H1 (cell line): ENCODE measurements at regions of chr4 and their contacts with region 1.

Region 1: DNA sequence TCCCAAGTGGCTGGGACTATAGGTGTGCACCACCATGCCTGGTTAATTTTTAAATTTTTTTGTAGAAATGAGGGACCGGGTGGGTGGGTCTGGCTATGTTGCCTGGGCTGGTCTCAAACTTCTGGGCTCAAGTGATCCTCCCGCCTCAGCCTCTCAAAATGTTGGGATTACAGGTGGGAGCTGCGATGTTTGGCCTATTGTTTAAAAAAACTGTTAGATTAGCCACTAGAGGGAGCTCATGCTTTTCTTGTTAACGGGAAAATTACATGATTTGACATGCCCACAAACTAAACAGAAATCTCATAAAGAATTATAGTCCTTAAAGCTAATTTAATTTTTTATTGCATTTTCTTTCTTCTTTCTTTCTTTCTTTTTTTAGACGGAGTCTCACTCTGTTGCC is 5.0 kb upstream of the SDAD1 start:
- DNase-seq: no peak
- H3K4me3 ChIP-seq: no peak overlapping the region
- H3K27ac ChIP-seq: no peak overlapping the region
- H3K4me1 ChIP-seq: no peaks in the 10 kb centered on the region; a peak in 1 of 7 replicates
- H3K27me3 ChIP-seq: no peaks in the 10 kb centered on the region
- CTCF ChIP-seq: peak in 2 of 3 experiments; percentile 44 to 54; a peak in 3 of 4 replicates
- EP300 ChIP-seq: no peak
- POLR2A ChIP-seq: no peak
- RAD21 ChIP-seq: peak; percentile 69 to 77

Region 2: DNA sequence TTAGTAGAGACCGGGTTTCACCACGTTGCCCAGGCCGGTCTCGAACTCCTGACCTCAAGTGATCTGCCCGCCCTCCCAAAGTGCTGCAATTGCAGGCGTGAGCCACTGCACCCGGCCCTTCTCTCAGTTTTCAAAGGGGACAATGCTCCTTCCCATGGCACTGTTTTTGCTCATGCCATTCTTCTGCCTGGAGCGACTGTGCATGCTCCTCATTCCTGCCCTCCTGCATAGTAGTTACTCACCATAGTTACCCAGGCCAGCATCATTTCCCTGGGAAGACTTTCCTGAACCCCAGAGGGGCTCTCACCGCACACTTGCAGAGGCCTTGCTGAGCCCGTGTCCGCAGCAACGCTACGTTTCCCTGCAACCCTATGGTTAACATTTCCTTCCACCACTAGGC is 14.8 kb after region 1 on chr4:
- CTCF ChIA-PET with region 1: interaction called, 14 read pairs
- POLR2A ChIA-PET with region 1: no interaction called
- DNase-seq: no peak
- H3K4me3 ChIP-seq: no peak overlapping the region
- H3K27ac ChIP-seq: no peak overlapping the region
- H3K4me1 ChIP-seq: peaks cover 0 to 3% (median 1%) of the 10 kb centered on the region in 4 experiments; a peak in 4 of 7 replicates
- H3K27me3 ChIP-seq: no peaks in the 10 kb centered on the region; a peak in 1 of 7 replicates
- CTCF ChIP-seq: no peak
- EP300 ChIP-seq: no peak
- POLR2A ChIP-seq: no peak
- RAD21 ChIP-seq: no peak

Region 3: GRCh38 chr4:76055016-76055415 is 59.3 kb after region 1 on chr4:
- CTCF ChIA-PET with region 1: interaction called, 25 read pairs
- POLR2A ChIA-PET with region 1: no interaction called
- DNase-seq: no peak
- H3K4me3 ChIP-seq: no peak overlapping the region
- H3K27ac ChIP-seq: no peak overlapping the region
- H3K4me1 ChIP-seq: peaks cover 0 to 13% (median 10%) of the 10 kb centered on the region in 4 experiments; a peak in 4 of 7 replicates
- H3K27me3 ChIP-seq: no peaks in the 10 kb centered on the region
- CTCF ChIP-seq: no peak
- EP300 ChIP-seq: no peak
- POLR2A ChIP-seq: no peak
- RAD21 ChIP-seq: no peak

Region 4: GRCh38 chr4:76067652-76068286 is 72.0 kb after region 1 on chr4:
- CTCF ChIA-PET with region 1: interaction called, 88 read pairs
- POLR2A ChIA-PET with region 1: interaction called, 5 read pairs
- DNase-seq: peak in 1 of 2 experiments; percentile 71
- H3K4me3 ChIP-seq: no peak overlapping the region
- H3K27ac ChIP-seq: no peak overlapping the region
- H3K4me1 ChIP-seq: peaks cover 0 to 5% (median 4%) of the 10 kb centered on the region in 4 experiments; a peak in 4 of 7 replicates
- H3K27me3 ChIP-seq: no peaks in the 10 kb centered on the region
- CTCF ChIP-seq: peak; percentile 42 to 79 (median 78)
- EP300 ChIP-seq: no peak
- POLR2A ChIP-seq: no peak
- RAD21 ChIP-seq: peak; percentile 88 to 90

Region 5: DNA sequence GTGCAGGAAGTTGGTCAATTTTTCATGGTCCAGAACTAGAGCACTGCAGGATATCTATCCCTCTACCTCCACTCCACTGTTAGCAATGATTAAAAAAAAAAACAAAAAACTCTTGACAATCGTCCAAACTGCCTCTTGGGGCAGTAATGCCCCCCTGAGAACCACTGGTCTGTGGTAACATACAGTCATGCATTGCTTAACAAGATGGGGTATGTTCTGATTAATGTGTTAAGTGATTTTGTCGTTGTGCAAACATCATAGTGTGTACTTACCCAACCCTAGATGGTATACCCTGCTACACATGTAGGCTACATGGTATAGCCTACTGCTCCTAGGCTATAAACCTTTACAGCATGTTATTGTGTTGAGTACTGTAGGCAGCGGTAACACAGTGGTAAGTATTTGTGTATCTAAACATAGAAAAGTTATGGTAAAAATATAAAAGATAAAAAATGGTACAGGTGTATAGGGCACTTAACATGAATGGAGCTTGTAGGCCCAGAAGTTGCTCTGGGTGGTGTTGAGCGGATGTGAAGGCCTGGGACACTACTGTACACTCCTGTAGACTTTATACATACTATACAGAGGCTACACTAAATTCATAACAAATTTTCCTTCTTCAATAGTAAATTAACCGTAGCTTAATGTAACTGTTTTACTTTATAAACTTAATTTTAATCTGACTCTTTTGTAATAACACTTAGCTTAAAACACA is 112.9 kb after region 1 on chr4:
- CTCF ChIA-PET with region 1: interaction called, 16 read pairs
- POLR2A ChIA-PET with region 1: no interaction called
- DNase-seq: no peak
- H3K4me3 ChIP-seq: no peak overlapping the region
- H3K27ac ChIP-seq: no peak overlapping the region
- H3K4me1 ChIP-seq: no peaks in the 10 kb centered on the region
- H3K27me3 ChIP-seq: peaks cover 0 to 2% (median 1%) of the 10 kb centered on the region in 4 experiments; a peak in 3 of 7 replicates
- CTCF ChIP-seq: peak in 2 of 3 experiments; percentile 21 to 43; a peak in 2 of 4 replicates
- EP300 ChIP-seq: no peak
- POLR2A ChIP-seq: no peak
- RAD21 ChIP-seq: peak in 1 of 2 experiments; percentile 37; a peak in 3 of 4 replicates

Region 6: GRCh38 chr4:76141241-76141640 is 145.5 kb after region 1 on chr4:
- CTCF ChIA-PET with region 1: no interaction called
- POLR2A ChIA-PET with region 1: no interaction called
- DNase-seq: no peak
- H3K4me3 ChIP-seq: no peak overlapping the region
- H3K27ac ChIP-seq: no peak overlapping the region
- H3K4me1 ChIP-seq: no peaks in the 10 kb centered on the region
- H3K27me3 ChIP-seq: no peaks in the 10 kb centered on the region
- CTCF ChIP-seq: no peak
- EP300 ChIP-seq: no peak
- POLR2A ChIP-seq: no peak; a peak in 1 of 3 replicates
- RAD21 ChIP-seq: no peak